Caco-2 (cell line): ENCODE measurements at regions of chr17 and their contacts with region 1.

Region 1: DNA sequence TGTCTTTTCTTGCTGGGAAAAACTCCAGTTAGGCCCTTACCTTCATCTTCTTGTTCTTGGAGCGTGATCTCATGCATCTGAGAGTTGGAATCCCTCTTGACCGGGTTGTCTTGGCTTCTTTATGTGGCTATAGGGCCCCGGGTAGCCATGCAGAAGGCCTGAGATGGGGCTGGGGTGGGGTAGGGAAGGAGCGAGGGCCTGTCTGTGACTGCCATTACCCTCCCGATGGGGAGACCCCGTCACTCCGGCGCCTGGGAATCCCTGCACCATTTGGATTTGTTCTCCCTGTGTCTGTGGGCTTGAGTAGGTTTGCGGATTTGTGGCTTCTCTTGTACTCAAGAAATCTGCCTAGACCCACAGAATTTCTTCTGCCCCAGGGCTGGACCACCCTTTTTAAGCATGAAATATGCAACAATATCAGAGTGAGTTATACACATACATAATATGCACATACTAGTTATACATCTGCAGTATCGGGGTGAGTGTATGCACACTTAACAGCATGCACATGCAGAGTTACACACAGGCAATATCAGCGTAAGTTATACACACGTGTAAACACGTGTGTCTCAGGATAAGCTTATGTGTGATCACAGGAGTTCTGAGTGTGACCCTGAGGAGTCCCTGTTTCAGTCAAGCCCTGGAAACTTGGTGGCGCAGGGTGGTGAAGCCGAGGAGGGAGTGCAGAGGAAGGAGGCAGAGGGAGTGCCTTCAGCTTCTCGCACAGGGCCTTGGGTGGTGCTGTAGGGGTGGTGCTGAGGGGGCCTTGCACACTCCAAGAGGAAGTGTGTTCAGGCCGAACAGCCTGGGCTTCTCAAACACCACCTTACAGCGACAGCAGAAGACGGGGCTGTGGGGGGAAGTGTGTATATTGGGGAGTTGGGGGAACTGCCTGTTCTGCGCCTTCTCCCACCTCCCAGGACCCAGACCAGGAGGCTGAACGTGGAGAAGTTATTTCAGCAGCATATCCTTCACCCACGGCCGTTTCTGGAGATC is 18.5 kb downstream of the CCDC42 start:
- DNase-seq: no peak
- H3K4me3 ChIP-seq: no peak overlapping the region
- H3K4me3 Mint-ChIP-seq: no peak overlapping the region
- H3K27ac Mint-ChIP-seq: no peak overlapping the region
- H3K4me1 ChIP-seq: peaks cover 15% of the 10 kb centered on the region
- H3K4me1 Mint-ChIP-seq: peaks cover 25% of the 10 kb centered on the region
- H3K27me3 ChIP-seq: no peaks in the 10 kb centered on the region
- H3K27me3 Mint-ChIP-seq: no peaks in the 10 kb centered on the region
- CTCF ChIP-seq: no peak

Region 2: GRCh38 chr17:8673612-8674011 is 52.6 kb before region 1 on chr17:
- CTCF ChIA-PET with region 1: no interaction called
- POLR2A ChIA-PET with region 1: no interaction called
- intact Hi-C with region 1: loop called (anchors 2 kb)
- DNase-seq: no peak
- H3K4me3 ChIP-seq: no peak overlapping the region
- H3K4me3 Mint-ChIP-seq: no peak overlapping the region
- H3K27ac Mint-ChIP-seq: no peak overlapping the region
- H3K4me1 ChIP-seq: no peaks in the 10 kb centered on the region
- H3K4me1 Mint-ChIP-seq: peaks cover 6% of the 10 kb centered on the region
- H3K27me3 ChIP-seq: no peaks in the 10 kb centered on the region
- H3K27me3 Mint-ChIP-seq: no peaks in the 10 kb centered on the region
- CTCF ChIP-seq: no peak

Region 3: DNA sequence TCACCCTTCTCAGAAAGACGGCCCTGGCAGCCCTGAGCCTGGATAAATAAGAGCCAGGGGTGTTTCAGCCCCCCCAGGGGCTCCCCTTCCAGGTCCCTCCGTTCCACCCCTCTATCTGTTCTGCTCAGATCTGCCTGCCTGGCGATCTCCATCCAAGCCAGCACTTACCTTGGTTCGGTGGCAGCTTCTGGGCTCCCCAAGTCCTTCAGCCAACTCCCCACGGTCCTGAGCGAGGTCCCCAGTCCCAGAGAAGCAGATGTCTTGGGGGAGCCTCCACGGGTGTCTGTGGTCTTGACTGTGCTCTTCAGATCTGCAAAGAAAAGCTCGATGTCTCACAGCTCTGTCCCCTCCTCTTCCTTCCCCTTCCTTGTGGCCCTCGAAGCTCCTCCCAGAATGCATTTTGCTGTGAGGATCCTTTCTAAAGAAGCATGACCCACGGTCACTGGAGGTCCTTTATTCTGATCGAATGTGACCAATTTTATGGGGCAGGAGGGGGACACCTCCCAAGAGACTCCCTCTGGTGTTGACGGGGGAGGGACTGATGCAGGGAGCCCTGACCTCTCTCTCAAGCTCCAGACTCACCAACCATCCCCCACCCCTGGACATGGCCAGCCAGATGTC is 141.3 kb after region 1 on chr17 and contains the start of gene PIK3R6:
- CTCF ChIA-PET with region 1: no interaction called
- POLR2A ChIA-PET with region 1: no interaction called
- intact Hi-C with region 1: no loop called
- DNase-seq: no peak
- H3K4me3 ChIP-seq: no peak within 1 kb of the TSS
- H3K4me3 Mint-ChIP-seq: no peak within 1 kb of the TSS
- H3K27ac Mint-ChIP-seq: no peak within 1 kb of the TSS
- H3K4me1 ChIP-seq: peaks cover 9% of the 10 kb centered on the region
- H3K4me1 Mint-ChIP-seq: no peaks in the 10 kb centered on the region
- H3K27me3 ChIP-seq: no peaks in the 10 kb centered on the region
- H3K27me3 Mint-ChIP-seq: no peaks in the 10 kb centered on the region
- CTCF ChIP-seq: no peak
- total RNA-seq, gene PIK3R6: not detected in 2 replicates